IMR-90 (cell line): ENCODE measurements at regions of chr19 and their contacts with region 1.

Region 1: GRCh38 chr19:58572818-58573657 is at the start of gene MZF1:
- DNase-seq: peak; percentile 100
- ATAC-seq: peak; percentile 73
- H3K4me3 ChIP-seq: peak within 1 kb of the TSS; percentile 54
- H3K27ac ChIP-seq: peak within 1 kb of the TSS; percentile 80
- H3K4me1 ChIP-seq: peaks cover 2% of the 10 kb centered on the region; the same call in 1 of the 2 replicates
- H3K27me3 ChIP-seq: no peaks in the 10 kb centered on the region
- CTCF ChIP-seq: no peak
- POLR2A ChIP-seq: peak; percentile 74
- RAD21 ChIP-seq: no peak
- total RNA-seq, gene MZF1: 3.4 and 3.6 TPM in 2 replicates

Region 2: GRCh38 chr19:58157045-58157728 is 415.9 kb before region 1 on chr19:
- CTCF ChIA-PET with region 1: no interaction called
- POLR2A ChIA-PET with region 1: no interaction called
- dilution Hi-C with region 1: no loop called
- in situ Hi-C with region 1: no loop called
- intact Hi-C with region 1: no loop called
- DNase-seq: no peak
- ATAC-seq: no peak
- H3K4me3 ChIP-seq: no peak overlapping the region
- H3K27ac ChIP-seq: no peak overlapping the region
- H3K4me1 ChIP-seq: no peaks in the 10 kb centered on the region; the same call in 1 of the 2 replicates
- H3K27me3 ChIP-seq: no peaks in the 10 kb centered on the region
- CTCF ChIP-seq: no peak
- POLR2A ChIP-seq: no peak
- RAD21 ChIP-seq: no peak

Region 3: DNA sequence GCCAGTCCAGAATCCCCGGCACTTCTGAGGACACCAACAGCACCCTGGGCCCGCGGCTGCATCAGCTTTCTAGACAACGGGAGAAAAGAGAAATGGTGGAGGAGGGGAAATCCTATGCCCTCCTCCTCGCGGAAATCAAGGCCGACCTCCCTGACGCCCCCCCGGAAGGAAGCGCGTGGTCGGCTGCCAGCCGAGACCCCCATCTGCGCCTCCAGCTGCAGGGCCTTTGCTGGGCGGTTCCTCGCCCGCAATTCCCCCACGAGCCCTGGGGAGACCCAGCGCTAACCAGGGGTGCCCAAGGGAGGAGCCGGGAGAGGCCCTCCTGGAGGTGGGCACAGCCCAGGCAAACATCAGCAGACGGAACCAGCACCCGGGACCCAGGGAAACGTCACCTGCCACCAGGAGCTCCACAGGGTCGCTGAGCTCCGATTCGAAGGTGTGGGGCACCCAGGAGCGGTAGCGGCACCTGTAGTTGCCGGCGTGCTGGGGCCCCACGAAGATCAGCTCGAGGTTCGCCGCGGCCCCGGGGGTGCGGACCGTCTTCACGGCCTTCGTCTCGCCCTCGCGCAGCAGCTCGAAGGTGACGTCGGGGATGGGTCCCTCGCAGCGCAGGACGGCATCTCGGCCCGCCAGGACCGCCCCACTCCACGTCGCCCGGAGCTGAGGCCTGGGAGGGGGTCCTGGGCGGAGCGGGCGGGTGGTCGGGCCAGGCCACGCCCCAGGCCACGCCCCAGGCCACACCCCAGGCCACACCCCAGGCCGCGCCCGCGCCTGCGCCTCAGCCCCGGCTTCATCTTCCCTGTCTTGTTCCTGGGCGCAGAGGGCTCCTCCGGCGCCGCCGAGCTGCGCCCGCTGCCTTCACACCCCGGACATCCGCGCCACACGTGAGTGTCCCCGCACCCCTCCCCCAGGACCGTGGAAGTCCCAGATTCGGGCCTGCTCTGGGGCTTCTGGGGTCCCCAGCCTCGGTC is 225.8 kb before region 1 on chr19:
- CTCF ChIA-PET with region 1: no interaction called
- POLR2A ChIA-PET with region 1: interaction called, 10 read pairs
- dilution Hi-C with region 1: no loop called
- in situ Hi-C with region 1: no loop called
- intact Hi-C with region 1: no loop called
- DNase-seq: peak; percentile 63
- ATAC-seq: peak; percentile 98
- H3K4me3 ChIP-seq: peak overlapping the region; percentile 66
- H3K27ac ChIP-seq: peak overlapping the region; percentile 57
- H3K4me1 ChIP-seq: peaks cover 6% of the 10 kb centered on the region; the same call in 1 of the 2 replicates
- H3K27me3 ChIP-seq: no peaks in the 10 kb centered on the region
- CTCF ChIP-seq: no peak
- POLR2A ChIP-seq: no peak
- RAD21 ChIP-seq: no peak

Region 4: DNA sequence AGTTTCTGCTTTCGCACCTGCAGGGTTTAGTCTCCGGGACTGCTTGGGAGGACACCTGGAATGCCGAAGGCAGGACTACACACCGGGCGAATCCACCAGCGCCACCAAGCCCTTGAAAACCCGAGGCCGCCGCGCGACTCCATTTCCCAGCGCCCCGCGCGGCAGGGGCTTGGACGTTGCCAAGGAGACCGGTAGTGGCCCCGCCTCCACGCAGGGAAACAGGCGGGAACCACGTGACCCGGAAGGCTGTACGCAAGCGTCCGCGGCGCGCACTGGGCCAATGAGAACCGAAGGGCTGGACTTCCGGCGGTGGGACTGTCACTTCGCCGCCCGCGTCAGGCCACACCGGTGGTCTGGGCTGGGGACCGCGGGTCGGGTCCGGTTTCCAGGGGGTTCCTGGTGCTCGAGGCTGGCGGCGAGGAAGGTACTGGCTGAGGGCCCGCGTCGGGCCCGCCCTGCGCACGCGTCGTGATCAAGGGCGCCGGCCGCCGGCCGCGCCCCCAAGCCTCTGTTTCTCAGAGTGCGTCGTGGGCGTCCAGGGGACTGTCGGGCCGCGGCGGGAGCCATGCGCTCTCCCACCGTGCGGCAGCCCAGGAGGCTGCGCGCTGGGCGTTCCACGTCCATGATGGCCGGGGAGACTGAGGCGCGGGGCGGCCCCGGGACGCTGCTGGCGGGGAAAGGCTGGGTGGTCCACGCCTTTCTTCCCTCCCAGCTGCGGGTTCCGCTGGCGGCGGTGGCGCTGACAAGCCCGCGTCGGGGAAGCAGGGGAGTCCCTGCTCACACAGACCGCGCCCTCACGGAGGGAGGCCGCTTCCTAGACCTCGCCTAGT is 106.1 kb before region 1 on chr19 and contains the start of gene ZNF324:
- CTCF ChIA-PET with region 1: no interaction called
- POLR2A ChIA-PET with region 1: no interaction called
- dilution Hi-C with region 1: no loop called
- in situ Hi-C with region 1: no loop called
- intact Hi-C with region 1: no loop called
- DNase-seq: peak; percentile 94
- ATAC-seq: peak; percentile 96
- H3K4me3 ChIP-seq: peak within 1 kb of the TSS; percentile 65
- H3K27ac ChIP-seq: peak within 1 kb of the TSS; percentile 41
- H3K4me1 ChIP-seq: peaks cover 7% of the 10 kb centered on the region
- H3K27me3 ChIP-seq: no peaks in the 10 kb centered on the region
- CTCF ChIP-seq: no peak
- POLR2A ChIP-seq: peak; percentile 80
- RAD21 ChIP-seq: no peak
- total RNA-seq, gene ZNF324: 6.6 and 6.9 TPM in 2 replicates

Region 5: DNA sequence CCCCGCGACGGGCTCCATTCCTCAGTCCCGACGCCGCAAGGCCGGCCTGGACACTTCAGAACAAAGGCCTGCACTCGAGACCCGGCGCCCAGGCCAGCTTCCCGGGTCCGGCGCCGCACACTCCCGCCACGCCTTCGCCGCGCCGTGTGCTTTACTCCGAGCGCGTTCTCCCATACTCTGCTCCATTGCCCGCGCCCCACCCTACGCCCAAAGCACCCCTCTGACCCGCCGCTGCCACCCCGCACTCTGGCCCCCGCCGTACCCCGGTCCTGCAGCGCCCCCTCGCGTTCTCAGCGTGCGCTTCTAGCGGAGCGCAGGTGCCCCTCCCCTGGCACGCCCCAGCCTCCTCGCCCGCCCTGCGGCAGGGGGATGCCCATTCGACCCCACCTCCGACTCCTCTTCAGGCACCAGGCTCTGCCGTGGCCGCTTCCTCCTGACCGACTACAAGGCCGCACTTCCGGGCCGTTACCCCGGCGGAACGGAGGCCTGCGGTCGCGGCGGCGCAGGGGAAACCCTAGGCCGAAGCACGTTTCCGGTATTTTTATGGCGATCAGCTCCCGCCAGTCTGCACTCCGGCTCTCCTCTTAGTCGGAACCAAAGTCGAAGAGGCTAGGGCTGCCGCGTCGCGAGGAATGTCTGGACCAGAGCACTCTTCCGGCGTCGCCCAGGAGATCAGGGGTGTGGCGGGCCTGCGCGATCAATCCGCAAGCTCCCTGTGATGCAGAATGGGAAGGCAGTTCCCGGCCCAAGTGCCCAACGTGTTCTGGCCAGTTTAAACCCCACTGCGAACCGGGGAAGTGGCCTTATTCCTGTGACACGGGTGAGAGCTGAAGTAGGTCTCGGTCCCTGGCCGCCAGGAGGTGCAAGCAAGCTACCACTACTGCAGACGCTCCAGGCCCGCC is 53.4 kb before region 1 on chr19 and contains the start of gene ZBTB45:
- CTCF ChIA-PET with region 1: no interaction called
- POLR2A ChIA-PET with region 1: no interaction called
- dilution Hi-C with region 1: no loop called
- in situ Hi-C with region 1: no loop called
- intact Hi-C with region 1: loop called (anchors 2 kb)
- DNase-seq: peak; percentile 96
- ATAC-seq: peak; percentile 84
- H3K4me3 ChIP-seq: peak within 1 kb of the TSS; percentile 69
- H3K27ac ChIP-seq: peak within 1 kb of the TSS; percentile 93
- H3K4me1 ChIP-seq: peaks cover 6% of the 10 kb centered on the region
- H3K27me3 ChIP-seq: no peaks in the 10 kb centered on the region
- CTCF ChIP-seq: peak; percentile 73
- POLR2A ChIP-seq: peak; percentile 66; the same call in 1 of the 2 replicates
- RAD21 ChIP-seq: peak; percentile 72
- total RNA-seq, gene ZBTB45: 1.4 TPM in 2 replicates

Region 6: GRCh38 chr19:58558623-58559274 is 14.3 kb before region 1 on chr19:
- CTCF ChIA-PET with region 1: no interaction called
- POLR2A ChIA-PET with region 1: no interaction called
- dilution Hi-C with region 1: no loop called
- in situ Hi-C with region 1: no loop called
- intact Hi-C with region 1: loop called (anchors 1 kb)
- DNase-seq: peak; percentile 98
- ATAC-seq: peak; percentile 69
- H3K4me3 ChIP-seq: peak overlapping the region; percentile 81
- H3K27ac ChIP-seq: peak overlapping the region; percentile 100
- H3K4me1 ChIP-seq: peaks cover 31% of the 10 kb centered on the region
- H3K27me3 ChIP-seq: no peaks in the 10 kb centered on the region
- CTCF ChIP-seq: no peak
- POLR2A ChIP-seq: peak; percentile 85
- RAD21 ChIP-seq: no peak